ENCODE measurements at regions of chr2 and their contacts with region 1.

Region 1: GRCh38 chr2:120693121-120693520 is 42.5 kb upstream of the GLI2 start:
- DNase-seq: no peak
- H3K4me3 ChIP-seq: no peak overlapping the region
- H3K27ac ChIP-seq: no peak overlapping the region
- H3K4me1 ChIP-seq: peaks cover 4 to 7% (median 6%) of the 10 kb centered on the region in 4 experiments; a peak in 6 of 7 replicates
- H3K27me3 ChIP-seq: peaks cover 0 to 21% (median 18%) of the 10 kb centered on the region in 4 experiments; a peak in 5 of 7 replicates
- CTCF ChIP-seq: no peak
- EP300 ChIP-seq: no peak
- POLR2A ChIP-seq: no peak
- RAD21 ChIP-seq: no peak

Region 2: DNA sequence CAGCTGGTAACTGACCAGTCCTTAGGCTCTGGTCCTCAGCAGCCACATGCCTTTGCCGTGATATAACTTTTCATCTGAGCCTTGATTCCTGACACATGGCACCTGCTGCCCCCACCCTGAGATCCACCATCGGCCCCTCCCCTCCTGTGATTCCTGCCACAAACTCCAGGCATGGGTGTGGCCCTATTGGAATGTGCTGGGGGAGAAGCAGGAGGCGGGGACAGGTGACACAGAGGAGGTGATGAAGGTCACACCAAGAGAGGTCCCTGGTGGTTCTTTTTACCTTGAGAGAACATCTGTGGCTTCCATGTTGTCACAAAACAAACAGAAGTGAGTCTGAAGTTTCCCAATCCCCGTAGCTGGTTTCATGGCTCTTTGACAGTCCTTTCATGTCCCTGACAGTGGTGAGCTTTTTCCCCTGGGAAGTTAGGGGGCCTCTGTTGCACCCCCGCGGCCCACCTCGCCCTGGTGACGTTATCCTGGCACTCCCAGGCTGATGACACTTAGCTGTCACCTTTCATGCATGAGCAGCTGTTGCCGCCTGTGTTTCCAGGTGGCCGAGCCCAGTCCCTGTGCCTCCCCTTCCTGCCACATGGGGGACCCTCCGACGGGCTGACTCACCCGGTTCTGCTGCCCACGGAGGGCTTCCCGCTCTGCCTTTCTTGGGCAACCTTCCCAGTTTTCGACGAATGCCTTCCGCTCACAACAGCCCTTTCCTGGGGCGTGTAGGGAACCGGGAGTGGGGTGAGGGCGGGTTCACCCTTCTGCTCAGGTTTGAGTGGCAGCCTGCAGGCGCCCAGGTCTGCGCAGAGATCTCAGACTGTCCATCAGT is 23.8 kb before region 1 on chr2:
- CTCF ChIA-PET with region 1: no interaction called
- POLR2A ChIA-PET with region 1: no interaction called
- DNase-seq: peak in 1 of 2 experiments; percentile 78
- H3K4me3 ChIP-seq: no peak overlapping the region
- H3K27ac ChIP-seq: no peak overlapping the region
- H3K4me1 ChIP-seq: peaks cover 0 to 6% (median 0%) of the 10 kb centered on the region in 4 experiments; a peak in 2 of 7 replicates
- H3K27me3 ChIP-seq: peaks cover 0 to 22% (median 19%) of the 10 kb centered on the region in 4 experiments; a peak in 6 of 7 replicates
- CTCF ChIP-seq: peak; percentile 70 to 89 (median 86); a peak in 3 of 4 replicates
- EP300 ChIP-seq: no peak
- POLR2A ChIP-seq: no peak
- RAD21 ChIP-seq: peak; percentile 55 to 70

Region 3: GRCh38 chr2:120735746-120736170 is 42.6 kb after region 1 on chr2 and contains the start of gene GLI2:
- CTCF ChIA-PET with region 1: interaction called, 20 read pairs
- POLR2A ChIA-PET with region 1: interaction called, 15 read pairs
- DNase-seq: peak; percentile 50 to 90
- H3K4me3 ChIP-seq: peak within 1 kb of the TSS; percentile 80 to 91 (median 89)
- H3K27ac ChIP-seq: peak within 1 kb of the TSS; percentile 79; the same call in 1 of the 2 replicates
- H3K4me1 ChIP-seq: peaks cover 12 to 24% (median 16%) of the 10 kb centered on the region in 4 experiments
- H3K27me3 ChIP-seq: no peaks in the 10 kb centered on the region; a peak in 1 of 7 replicates
- CTCF ChIP-seq: peak; percentile 66 to 98 (median 83)
- EP300 ChIP-seq: no peak
- POLR2A ChIP-seq: no peak
- RAD21 ChIP-seq: peak; percentile 60 to 78
- total RNA-seq, gene GLI2: 46.9 and 49.8 TPM in 2 replicates

Region 4: GRCh38 chr2:120815292-120815691 is 122.2 kb after region 1 on chr2:
- CTCF ChIA-PET with region 1: interaction called, 11 read pairs
- POLR2A ChIA-PET with region 1: no interaction called
- DNase-seq: no peak
- H3K4me3 ChIP-seq: no peak overlapping the region
- H3K27ac ChIP-seq: no peak overlapping the region
- H3K4me1 ChIP-seq: peaks cover 0 to 10% (median 3%) of the 10 kb centered on the region in 4 experiments; a peak in 5 of 7 replicates
- H3K27me3 ChIP-seq: no peaks in the 10 kb centered on the region
- CTCF ChIP-seq: no peak
- EP300 ChIP-seq: no peak
- POLR2A ChIP-seq: no peak
- RAD21 ChIP-seq: no peak

Region 5: DNA sequence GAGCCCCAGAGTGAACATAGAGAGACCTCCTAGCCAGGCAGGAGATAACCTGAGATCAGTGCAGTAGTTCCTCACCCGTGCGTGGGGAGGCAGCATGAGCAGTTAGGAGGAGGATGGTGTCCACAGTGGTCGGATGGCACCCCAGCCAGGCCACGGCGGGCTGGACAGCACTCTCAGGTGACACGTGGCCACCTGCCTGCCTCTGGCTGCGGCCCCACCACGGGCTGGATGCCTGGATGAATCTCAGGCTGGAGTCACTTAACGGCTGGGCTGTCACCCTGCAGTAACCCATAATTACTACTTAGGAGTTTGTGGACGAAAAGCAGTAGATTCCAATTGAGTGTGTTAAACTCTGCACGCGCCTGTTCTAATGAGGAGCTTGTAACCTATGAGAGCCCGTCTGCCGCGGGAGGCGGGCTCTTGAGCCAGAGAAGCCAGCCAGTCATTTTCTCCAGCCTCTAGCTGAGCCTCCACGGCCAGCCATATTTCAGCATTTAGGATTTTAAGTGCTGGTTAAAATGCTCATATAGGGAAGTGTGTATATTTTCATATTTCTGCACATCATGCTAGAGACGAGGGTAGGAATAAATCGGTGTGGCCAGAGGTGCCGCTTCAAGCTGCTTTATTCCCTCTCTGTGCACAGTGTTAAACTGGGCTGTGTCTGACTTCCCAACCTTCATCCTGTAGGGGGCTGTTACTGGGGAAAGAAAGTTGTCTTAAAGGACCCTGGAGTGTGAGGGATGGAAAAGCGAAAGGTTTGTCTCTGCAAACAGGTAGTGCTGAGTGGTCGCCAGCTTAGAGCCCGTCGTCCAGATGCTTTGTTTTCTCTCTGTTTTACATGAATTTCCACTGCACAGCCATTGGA is 186.5 kb after region 1 on chr2:
- CTCF ChIA-PET with region 1: interaction called, 17 read pairs
- POLR2A ChIA-PET with region 1: no interaction called
- DNase-seq: no peak
- H3K4me3 ChIP-seq: no peak overlapping the region
- H3K27ac ChIP-seq: no peak overlapping the region
- H3K4me1 ChIP-seq: peaks cover 0 to 9% (median 6%) of the 10 kb centered on the region in 4 experiments; a peak in 5 of 7 replicates
- H3K27me3 ChIP-seq: no peaks in the 10 kb centered on the region
- CTCF ChIP-seq: peak in 1 of 3 experiments; percentile 17; a peak in 1 of 4 replicates
- EP300 ChIP-seq: no peak
- POLR2A ChIP-seq: no peak
- RAD21 ChIP-seq: no peak

Region 6: GRCh38 chr2:120914839-120915521 is 221.9 kb after region 1 on chr2:
- CTCF ChIA-PET with region 1: interaction called, 11 read pairs
- POLR2A ChIA-PET with region 1: no interaction called
- DNase-seq: no peak
- H3K4me3 ChIP-seq: no peak overlapping the region
- H3K27ac ChIP-seq: no peak overlapping the region; the same call in 1 of the 2 replicates
- H3K4me1 ChIP-seq: peaks cover 0 to 12% (median 8%) of the 10 kb centered on the region in 4 experiments; a peak in 6 of 7 replicates
- H3K27me3 ChIP-seq: no peaks in the 10 kb centered on the region
- CTCF ChIP-seq: no peak
- EP300 ChIP-seq: no peak
- POLR2A ChIP-seq: no peak
- RAD21 ChIP-seq: no peak

Region 7: DNA sequence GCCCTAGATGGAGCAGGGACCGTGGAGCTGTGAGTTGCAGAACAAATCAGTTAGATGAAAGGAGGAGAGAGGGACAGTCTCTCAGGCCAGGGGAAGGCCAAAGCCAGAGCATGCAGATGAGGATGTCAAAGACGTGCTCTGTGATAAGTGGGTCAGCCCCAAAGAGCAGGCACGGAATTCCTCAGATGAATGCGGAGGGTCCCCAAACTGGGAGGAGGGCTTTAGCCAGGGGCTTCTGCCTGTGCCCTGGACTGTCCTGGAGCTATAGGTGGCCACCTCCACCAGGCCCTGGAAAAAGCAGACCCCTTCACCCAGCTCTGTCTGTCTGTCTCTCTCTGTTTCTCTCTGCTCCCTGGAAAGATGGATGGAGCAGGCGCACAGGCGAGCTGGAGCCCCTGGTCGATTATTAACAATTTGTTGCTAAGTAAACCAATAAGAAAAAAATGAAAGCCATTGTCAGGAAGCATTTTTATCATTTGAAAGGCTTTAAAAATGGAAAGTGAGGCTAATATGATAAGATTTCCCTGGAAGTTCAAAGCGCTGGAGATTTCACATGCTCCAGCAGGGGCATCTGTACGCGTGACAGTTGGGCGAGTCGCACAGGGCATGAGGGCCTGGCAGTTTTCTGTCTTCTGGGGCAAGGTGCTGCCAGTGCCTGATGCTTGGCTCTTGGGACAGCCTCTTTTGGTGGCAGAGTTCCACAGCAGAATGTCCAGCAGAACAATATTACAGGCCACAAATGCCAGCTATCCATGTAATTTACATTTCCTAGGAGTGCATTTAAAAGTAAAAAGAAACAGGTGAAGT is 283.6 kb after region 1 on chr2:
- CTCF ChIA-PET with region 1: interaction called, 12 read pairs
- POLR2A ChIA-PET with region 1: no interaction called
- DNase-seq: no peak
- H3K4me3 ChIP-seq: no peak overlapping the region
- H3K27ac ChIP-seq: no peak overlapping the region
- H3K4me1 ChIP-seq: 0 out of 7 replicates have a peak, but pooled peaks cover 0 to under 1% (median 0%) of the 10 kb centered on the region in 4 experiments
- H3K27me3 ChIP-seq: no peaks in the 10 kb centered on the region
- CTCF ChIP-seq: no peak
- EP300 ChIP-seq: no peak
- POLR2A ChIP-seq: no peak
- RAD21 ChIP-seq: no peak

Region 8: DNA sequence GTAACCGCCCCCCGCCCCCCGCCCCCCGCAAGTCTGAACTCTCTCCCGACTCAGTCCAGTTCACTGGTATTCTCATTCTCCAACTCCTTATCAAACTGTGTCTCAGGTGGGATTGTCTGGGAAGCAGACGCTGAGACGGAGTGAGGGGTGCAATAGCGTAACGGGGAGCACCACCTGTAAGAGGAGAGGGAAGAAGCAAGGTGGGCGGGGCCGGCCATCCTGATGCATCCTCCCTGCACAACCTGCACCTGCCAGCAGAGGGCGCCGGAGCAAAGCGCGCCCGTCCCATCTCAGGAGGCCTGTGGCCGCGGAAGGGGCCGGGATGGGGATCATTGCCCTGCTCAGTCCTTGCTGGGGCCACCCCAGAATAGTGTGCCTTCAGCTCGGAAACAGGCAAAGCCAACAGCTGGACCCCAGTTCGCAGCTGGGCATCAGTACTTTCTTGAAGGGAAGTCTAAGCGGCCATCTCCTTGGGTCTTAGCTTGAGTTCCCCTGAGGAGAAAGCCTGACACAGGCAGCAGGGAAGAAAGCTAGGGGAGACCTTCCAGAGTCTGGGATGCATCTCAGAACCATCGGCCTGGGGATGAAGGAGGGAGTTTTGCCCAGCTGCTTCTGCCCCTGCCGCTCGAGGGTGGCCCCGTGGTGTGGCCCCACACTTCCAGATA is 383.9 kb after region 1 on chr2:
- CTCF ChIA-PET with region 1: interaction called, 88 read pairs
- POLR2A ChIA-PET with region 1: interaction called, 33 read pairs
- DNase-seq: peak in 1 of 2 experiments; percentile 99
- H3K4me3 ChIP-seq: peak overlapping the region in 3 of 4 experiments; percentile 28 to 54 (median 36); a peak in 6 of 8 replicates
- H3K27ac ChIP-seq: no peak overlapping the region
- H3K4me1 ChIP-seq: peaks cover 0 to 19% (median 13%) of the 10 kb centered on the region in 4 experiments; a peak in 6 of 7 replicates
- H3K27me3 ChIP-seq: peaks cover 0 to 32% (median 20%) of the 10 kb centered on the region in 4 experiments; a peak in 6 of 7 replicates
- CTCF ChIP-seq: peak in 2 of 3 experiments; percentile 94 to 99; a peak in 3 of 4 replicates
- EP300 ChIP-seq: no peak
- POLR2A ChIP-seq: no peak
- RAD21 ChIP-seq: peak; percentile 52 to 61